ENCODE measurements at regions of chr5 and their contacts with region 1.

Region 1: DNA sequence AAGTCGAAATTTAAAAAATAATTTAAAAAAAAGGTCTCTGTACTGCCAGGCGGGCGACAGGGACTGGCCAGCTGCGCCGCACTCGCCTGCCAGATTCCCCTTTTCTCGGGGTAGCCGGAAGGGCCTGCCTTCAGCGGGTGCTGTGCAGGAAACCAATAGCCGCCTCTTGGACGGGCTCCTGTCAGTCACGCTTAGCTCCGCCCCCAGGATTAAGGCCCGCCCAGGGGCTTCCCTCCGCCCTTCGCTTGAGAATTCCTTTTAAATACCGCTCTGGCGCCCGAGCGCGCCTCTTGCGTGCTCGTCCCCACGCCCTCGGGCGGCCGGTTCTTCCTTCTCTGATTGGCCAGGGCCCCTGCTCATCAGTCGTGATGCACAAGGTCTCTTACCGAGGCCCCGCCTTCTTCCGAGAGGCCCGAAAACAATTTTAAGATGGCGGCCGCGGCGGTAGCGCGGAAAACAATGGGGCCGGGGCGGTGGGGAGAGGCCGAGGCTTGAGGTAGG is at the start of gene MAML1:
- DNase-seq: peak; percentile 98 to 100
- H3K4me3 ChIP-seq: peak within 1 kb of the TSS; percentile 77
- H3K27ac ChIP-seq: peak within 1 kb of the TSS; percentile 74
- H3K4me1 ChIP-seq: peaks cover 39% of the 10 kb centered on the region
- H3K27me3 ChIP-seq: no peaks in the 10 kb centered on the region
- CTCF ChIP-seq: no peak
- total RNA-seq, gene MAML1: 25.7 and 34.0 TPM in 2 replicates

Region 2: DNA sequence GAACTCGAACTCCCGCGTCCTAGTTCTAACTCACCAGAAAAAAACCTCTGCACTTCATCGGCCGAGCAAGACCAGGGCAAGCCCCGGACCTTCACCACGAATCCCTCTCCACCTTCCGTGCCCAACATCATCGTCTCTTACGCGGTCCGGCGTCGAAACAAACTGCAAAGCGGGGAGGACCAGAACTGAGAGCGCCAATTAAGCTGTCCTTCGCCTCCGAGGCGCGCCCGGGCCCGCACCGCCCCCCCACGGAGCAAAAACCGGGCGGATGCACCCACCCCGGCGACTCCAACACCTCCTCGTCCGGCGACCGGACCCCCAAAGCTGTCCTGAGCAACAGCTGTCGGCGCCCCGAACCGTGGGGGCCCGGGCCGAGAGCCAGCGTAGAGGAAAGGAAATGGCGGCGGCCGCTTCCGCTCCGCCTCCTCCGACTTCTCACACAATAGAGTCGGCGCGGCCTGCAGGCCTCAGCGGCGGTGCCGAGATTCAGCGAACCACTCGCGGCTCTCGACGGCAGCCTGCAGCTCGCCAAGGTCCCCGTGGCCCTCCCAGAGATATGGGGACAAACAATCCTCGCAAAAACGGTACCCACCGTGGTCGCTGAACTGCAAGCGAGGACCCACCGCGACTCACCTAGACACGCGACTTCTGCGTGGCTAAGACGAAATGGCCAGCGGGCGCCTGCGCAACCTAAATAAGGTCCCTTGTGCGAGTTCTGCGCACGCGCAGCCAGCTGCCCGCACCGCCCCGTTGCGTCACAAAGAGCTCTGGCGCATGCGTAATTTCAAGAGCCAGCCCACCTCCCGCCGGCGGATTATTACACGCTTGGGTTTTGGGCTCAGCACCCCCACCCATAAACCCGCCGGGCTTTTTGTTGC is 109.2 kb before region 1 on chr5 and contains the start of gene HNRNPH1:
- CTCF ChIA-PET with region 1: no interaction called
- POLR2A ChIA-PET with region 1: interaction called, 11 read pairs
- intact Hi-C with region 1: loop called (anchors 10 kb)
- DNase-seq: peak; percentile 93 to 99
- H3K4me3 ChIP-seq: peak within 1 kb of the TSS; percentile 95
- H3K27ac ChIP-seq: peak within 1 kb of the TSS; percentile 94
- H3K4me1 ChIP-seq: peaks cover 36% of the 10 kb centered on the region
- H3K27me3 ChIP-seq: no peaks in the 10 kb centered on the region
- CTCF ChIP-seq: 0 out of 2 replicates have a peak, but pooled peaks have one; percentile 28
- total RNA-seq, gene HNRNPH1: 626 and 723 TPM in 2 replicates

Region 3: GRCh38 chr5:179697993-179698934 is 34.2 kb before region 1 on chr5:
- CTCF ChIA-PET with region 1: no interaction called
- POLR2A ChIA-PET with region 1: interaction called, 9 read pairs
- intact Hi-C with region 1: loop called (anchors 1 kb)
- DNase-seq: peak; percentile 96 to 100
- H3K4me3 ChIP-seq: peak overlapping the region; percentile 89
- H3K27ac ChIP-seq: peak overlapping the region; percentile 91
- H3K4me1 ChIP-seq: peaks cover 25% of the 10 kb centered on the region
- H3K27me3 ChIP-seq: no peaks in the 10 kb centered on the region
- CTCF ChIP-seq: no peak

Region 4: GRCh38 chr5:179821581-179822432 is 89.3 kb after region 1 on chr5:
- CTCF ChIA-PET with region 1: no interaction called
- POLR2A ChIA-PET with region 1: interaction called, 3 read pairs
- intact Hi-C with region 1: loop called (anchors 1 kb)
- DNase-seq: peak; percentile 80 to 95
- H3K4me3 ChIP-seq: peak overlapping the region; percentile 98
- H3K27ac ChIP-seq: peak overlapping the region; percentile 100
- H3K4me1 ChIP-seq: peaks cover 55% of the 10 kb centered on the region
- H3K27me3 ChIP-seq: no peaks in the 10 kb centered on the region
- CTCF ChIP-seq: no peak

Region 5: GRCh38 chr5:179907570-179908324 is 175.3 kb after region 1 on chr5 and contains the start of gene TBC1D9B:
- CTCF ChIA-PET with region 1: no interaction called
- POLR2A ChIA-PET with region 1: interaction called, 6 read pairs
- intact Hi-C with region 1: loop called (anchors 10 kb)
- DNase-seq: peak in 1 of 2 experiments; percentile 69
- H3K4me3 ChIP-seq: peak within 1 kb of the TSS; percentile 95
- H3K27ac ChIP-seq: 0 out of 2 replicates have a peak within 1 kb of the TSS, but pooled peaks have one; percentile 9
- H3K4me1 ChIP-seq: peaks cover 11% of the 10 kb centered on the region
- H3K27me3 ChIP-seq: no peaks in the 10 kb centered on the region
- CTCF ChIP-seq: 0 out of 2 replicates have a peak, but pooled peaks have one; percentile 17
- total RNA-seq, gene TBC1D9B: 118 and 148 TPM in 2 replicates

Region 6: DNA sequence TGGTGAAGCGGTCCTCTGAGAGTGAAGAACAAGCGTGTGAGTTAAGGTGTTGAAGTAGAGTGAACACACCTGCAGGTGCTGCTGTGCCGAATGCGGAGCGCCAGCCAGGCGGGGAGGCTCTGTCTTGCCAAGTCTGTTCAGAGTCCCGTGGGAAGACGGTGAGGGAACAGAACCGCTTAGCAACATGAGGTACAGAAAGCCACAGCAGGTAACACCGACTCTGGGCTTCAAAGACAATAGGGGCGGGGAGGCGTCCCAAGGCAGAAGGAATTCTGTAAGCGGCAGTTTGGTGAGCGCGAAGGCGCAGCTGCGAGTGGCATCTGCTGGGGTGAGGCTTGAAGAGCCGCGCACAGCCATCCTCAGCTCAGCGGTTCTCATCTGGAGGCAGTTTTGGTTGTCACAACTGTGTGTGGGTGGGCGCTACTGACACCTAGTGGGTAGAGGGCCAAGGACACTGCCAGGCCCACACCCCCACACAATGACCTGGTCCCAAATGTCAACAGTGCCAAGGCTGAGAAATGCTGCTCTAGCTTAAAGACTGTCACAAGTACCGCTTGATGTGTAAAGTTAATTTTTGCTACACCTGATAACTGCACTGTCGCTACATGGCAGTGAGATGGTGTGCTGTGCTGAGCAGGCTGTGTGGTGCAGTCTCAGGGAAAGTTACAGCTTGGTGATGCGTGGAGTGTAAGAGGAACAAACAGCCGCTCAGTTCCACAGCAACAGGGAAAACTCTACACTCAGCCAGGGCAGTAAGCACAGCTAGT is 242.7 kb after region 1 on chr5:
- CTCF ChIA-PET with region 1: no interaction called
- POLR2A ChIA-PET with region 1: no interaction called
- intact Hi-C with region 1: no loop called
- DNase-seq: peak in 1 of 2 experiments; percentile 32
- H3K4me3 ChIP-seq: no peak overlapping the region
- H3K27ac ChIP-seq: no peak overlapping the region
- H3K4me1 ChIP-seq: no peaks in the 10 kb centered on the region
- H3K27me3 ChIP-seq: no peaks in the 10 kb centered on the region
- CTCF ChIP-seq: peak; percentile 59